ENCODE measurements at regions of chr3 and their contacts with region 1.

Region 1: GRCh38 chr3:53195602-53196574 is 34.9 kb downstream of the PRKCD start:
- DNase-seq: peak; percentile 68
- ATAC-seq: peak; percentile 83

Region 2: GRCh38 chr3:53114011-53114400 is 81.9 kb before region 1 on chr3:
- intact Hi-C with region 1: loop called (anchors 2 kb)
- DNase-seq: peak; percentile 83
- ATAC-seq: peak; percentile 89

Region 3: GRCh38 chr3:53130179-53131061 is 65.5 kb before region 1 on chr3 and contains the start of gene RFT1:
- intact Hi-C with region 1: loop called (anchors 5 kb)
- DNase-seq: peak; percentile 100
- ATAC-seq: peak; percentile 97
- total RNA-seq, gene RFT1: 9.8 TPM